BJ (cell line): ENCODE measurements at regions of chr6 and their contacts with region 1.

Region 1: DNA sequence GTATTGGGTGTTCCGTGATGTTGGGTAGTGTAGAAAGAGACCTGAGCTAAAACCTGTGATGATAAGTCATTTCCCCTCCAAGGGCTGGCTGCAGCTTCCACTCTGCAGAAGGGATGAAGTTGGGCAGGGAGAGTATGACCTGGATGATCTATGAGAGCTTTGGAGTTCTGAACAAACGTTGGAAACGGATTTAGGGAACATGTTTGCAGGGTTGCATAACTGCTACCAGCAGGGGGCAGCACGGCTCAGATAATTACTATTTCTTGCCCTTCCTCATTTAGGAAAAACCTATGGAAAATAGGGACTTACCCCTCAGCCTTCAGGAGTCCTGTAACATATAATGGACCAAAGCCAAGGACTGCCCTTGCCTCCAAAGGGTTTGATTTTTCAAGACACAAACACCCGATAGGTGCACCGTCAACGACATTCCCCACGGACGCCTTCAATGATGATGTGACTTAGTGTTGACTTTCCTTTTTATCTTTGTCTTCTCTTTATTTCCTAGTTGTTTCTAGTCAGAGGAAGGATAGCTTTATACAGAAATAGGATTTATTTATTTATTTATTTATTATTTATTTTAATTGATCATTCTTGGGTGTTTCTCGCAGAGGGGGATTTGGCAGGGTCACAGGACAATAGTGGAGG is 164.9 kb upstream of the SASH1 start:
- DNase-seq: no peak
- H3K4me3 ChIP-seq: no peak overlapping the region
- H3K27me3 ChIP-seq: no peaks in the 10 kb centered on the region
- CTCF ChIP-seq: peak; percentile 81

Region 2: GRCh38 chr6:147506704-147507114 is 671.0 kb before region 1 on chr6:
- CTCF ChIA-PET with region 1: interaction called, 29 read pairs
- POLR2A ChIA-PET with region 1: no interaction called
- DNase-seq: no peak
- H3K4me3 ChIP-seq: peak overlapping the region; percentile 67
- H3K27me3 ChIP-seq: peaks cover 3% of the 10 kb centered on the region; the same call in 1 of the 2 replicates
- CTCF ChIP-seq: peak; percentile 89

Region 3: DNA sequence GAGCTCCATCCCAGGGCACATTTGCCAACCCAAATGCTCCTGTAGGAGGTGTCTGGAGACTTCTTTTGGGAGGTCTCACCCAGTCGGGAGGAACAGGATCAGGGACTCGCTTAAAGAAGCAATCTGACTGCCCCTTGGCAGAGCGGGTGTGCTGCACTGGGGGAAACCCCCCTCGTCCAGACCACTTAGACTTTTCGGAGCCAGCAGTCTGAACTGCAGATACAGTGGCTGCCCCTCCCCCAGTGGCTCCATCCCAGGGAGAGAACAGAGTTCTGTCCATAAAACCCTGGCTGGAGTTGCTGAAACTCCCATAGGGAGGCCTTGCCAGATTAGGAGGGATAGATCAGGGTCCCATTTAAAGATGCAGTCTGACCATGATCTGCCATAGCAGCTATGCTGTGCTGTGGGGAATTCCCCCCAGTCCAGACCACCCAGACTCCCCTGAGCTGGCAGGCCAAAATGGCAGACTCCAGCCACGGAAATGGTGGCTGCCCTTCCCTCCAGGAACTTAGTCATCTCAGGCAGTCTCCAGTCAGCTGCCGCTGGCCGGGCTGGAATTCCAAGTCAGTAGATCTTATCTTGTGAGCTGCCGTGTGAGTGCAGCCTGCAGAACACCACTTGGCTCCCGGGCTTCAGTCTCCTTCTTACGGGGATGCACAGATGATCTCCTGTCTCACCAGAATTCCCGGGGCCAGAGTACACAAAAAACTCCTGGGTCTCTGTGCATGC is 113.1 kb before region 1 on chr6:
- CTCF ChIA-PET with region 1: no interaction called
- POLR2A ChIA-PET with region 1: no interaction called
- DNase-seq: peak; percentile 12
- H3K4me3 ChIP-seq: no peak overlapping the region
- H3K27me3 ChIP-seq: no peaks in the 10 kb centered on the region
- CTCF ChIP-seq: no peak

Region 4: DNA sequence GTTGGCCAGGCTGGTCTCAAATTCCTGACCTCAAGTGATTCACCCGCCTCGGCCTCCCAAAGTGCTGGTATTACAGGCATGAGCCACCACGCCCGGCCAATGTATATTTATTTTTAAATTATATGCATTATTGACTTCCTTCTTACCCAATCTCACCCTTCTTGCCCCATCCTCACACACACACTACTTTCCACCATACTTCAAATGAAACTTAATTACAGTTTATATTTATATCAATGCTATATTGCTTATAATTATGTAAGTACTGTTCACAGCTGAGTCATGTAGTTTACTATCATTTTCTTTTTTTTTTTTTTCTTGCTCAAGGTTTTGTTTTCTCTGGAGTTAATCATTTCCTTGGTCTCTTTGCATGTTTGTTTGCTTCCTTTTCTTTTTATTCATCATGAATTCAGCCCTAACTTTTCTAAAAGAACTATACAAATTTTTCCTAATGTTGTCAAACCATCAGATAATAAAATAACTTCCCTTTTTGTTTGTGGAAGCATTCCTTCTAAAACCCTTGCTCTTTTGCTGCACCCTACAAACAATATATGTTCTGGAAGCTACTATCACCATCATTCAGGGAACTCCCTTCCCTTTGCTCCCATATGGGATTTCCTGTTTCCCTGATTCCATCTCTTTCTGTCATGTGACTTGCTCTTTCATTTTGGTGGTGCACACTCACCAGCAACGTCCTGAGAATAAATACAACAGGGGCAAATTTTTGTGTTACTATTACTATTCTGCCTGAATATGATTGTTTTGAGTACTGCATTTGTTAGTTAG is 36.7 kb before region 1 on chr6:
- CTCF ChIA-PET with region 1: no interaction called
- POLR2A ChIA-PET with region 1: no interaction called
- DNase-seq: no peak
- H3K4me3 ChIP-seq: no peak overlapping the region
- H3K27me3 ChIP-seq: no peaks in the 10 kb centered on the region
- CTCF ChIP-seq: no peak

Region 5: GRCh38 chr6:148192310-148192709 is 14.6 kb after region 1 on chr6:
- CTCF ChIA-PET with region 1: interaction called, 22 read pairs
- POLR2A ChIA-PET with region 1: no interaction called
- DNase-seq: peak; percentile 68
- H3K4me3 ChIP-seq: no peak overlapping the region
- H3K27me3 ChIP-seq: no peaks in the 10 kb centered on the region
- CTCF ChIP-seq: no peak

Region 6: GRCh38 chr6:148240461-148240840 is 62.7 kb after region 1 on chr6:
- CTCF ChIA-PET with region 1: interaction called, 27 read pairs
- POLR2A ChIA-PET with region 1: no interaction called
- DNase-seq: peak; percentile 60
- H3K4me3 ChIP-seq: no peak overlapping the region
- H3K27me3 ChIP-seq: no peaks in the 10 kb centered on the region
- CTCF ChIP-seq: no peak

Region 7: GRCh38 chr6:148250975-148251685 is 73.4 kb after region 1 on chr6:
- CTCF ChIA-PET with region 1: interaction called, 61 read pairs
- POLR2A ChIA-PET with region 1: no interaction called
- DNase-seq: no peak
- H3K4me3 ChIP-seq: no peak overlapping the region
- H3K27me3 ChIP-seq: no peaks in the 10 kb centered on the region
- CTCF ChIP-seq: peak; percentile 53

Region 8: DNA sequence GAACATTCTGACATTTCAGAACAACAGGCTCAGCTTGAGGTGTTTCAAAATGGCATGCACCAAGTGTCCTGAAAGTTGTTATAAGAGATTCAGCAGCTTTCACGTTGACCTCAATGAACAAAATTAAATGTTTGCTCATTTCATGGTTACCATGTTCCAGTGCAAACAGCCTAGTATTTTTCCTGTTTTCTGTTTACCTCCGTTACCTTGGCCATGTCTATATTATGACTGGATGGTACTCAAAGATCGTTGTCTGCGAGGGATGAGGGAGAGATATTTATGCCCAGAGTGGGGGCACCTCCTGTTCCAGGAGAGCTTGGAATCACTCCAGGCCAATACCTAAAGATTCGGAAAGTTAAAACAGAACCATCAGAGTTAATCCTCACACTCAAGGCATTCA is 81.2 kb after region 1 on chr6:
- CTCF ChIA-PET with region 1: interaction called, 61 read pairs
- POLR2A ChIA-PET with region 1: no interaction called
- DNase-seq: no peak
- H3K4me3 ChIP-seq: no peak overlapping the region
- H3K27me3 ChIP-seq: no peaks in the 10 kb centered on the region
- CTCF ChIP-seq: no peak

Region 9: GRCh38 chr6:148464319-148465010 is 286.8 kb after region 1 on chr6:
- CTCF ChIA-PET with region 1: interaction called, 31 read pairs
- POLR2A ChIA-PET with region 1: no interaction called
- DNase-seq: no peak
- H3K4me3 ChIP-seq: no peak overlapping the region
- H3K27me3 ChIP-seq: no peaks in the 10 kb centered on the region
- CTCF ChIP-seq: peak; percentile 88

Region 10: DNA sequence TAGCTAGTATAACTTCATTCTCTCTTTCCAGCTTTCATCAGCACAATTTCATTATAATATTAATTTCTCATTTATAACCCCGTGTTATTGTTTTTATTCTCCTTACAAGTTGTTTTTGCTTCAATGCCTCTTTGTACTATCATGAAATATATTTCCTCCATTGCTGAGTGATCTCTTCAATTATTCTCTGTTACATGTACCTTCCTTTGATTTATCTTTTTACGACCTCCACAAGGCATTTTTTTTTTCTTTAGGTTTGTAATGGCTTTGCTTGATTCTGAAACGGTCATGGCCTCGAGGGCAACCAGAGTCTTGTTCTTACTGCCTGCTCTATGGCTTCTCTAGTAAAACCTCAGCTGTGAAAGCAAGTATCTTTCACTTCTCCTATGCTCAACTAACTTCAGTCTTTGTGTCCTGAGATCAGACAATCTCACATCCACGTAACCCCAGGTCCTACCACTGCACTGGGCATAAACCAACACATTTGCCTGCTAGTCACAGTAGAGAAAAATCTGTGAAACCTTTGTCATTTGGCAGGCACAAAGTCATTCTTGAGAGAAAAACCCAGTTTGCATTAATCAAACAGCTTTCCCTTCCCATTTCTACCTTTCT is 689.1 kb after region 1 on chr6:
- CTCF ChIA-PET with region 1: no interaction called
- POLR2A ChIA-PET with region 1: no interaction called
- DNase-seq: no peak
- H3K4me3 ChIP-seq: no peak overlapping the region
- H3K27me3 ChIP-seq: no peaks in the 10 kb centered on the region
- CTCF ChIP-seq: no peak